Endothelial cell of umbilical vein (primary cell): ENCODE measurements at regions of chr9 and their contacts with region 1.

Region 1: DNA sequence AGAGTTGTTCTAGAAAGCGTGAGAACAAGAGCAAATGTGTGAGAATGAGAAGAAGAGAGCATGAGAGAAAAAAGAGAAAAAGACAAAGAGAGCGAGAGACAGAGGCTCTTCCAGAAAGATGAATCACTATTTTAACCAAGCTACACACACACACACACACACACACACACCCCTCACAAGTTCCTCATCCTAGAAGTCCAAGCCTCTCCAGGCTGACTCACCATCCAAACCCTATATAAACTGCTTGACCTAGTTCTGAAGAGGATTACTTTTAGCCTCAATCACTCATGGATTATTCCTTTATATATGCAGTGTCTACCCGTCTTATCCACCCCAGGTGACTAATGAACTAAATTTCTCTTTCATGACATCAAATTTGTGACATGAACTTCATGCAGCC is 37.6 kb downstream of the C9orf57 start:
- DNase-seq: no peak
- H3K4me3 ChIP-seq: no peak overlapping the region
- H3K27ac ChIP-seq: no peak overlapping the region
- H3K4me1 ChIP-seq: no peaks in the 10 kb centered on the region
- H3K27me3 ChIP-seq: no peaks in the 10 kb centered on the region
- CTCF ChIP-seq: no peak
- POLR2A ChIP-seq: no peak

Region 2: GRCh38 chr9:71285191-71285656 is 737.6 kb before region 1 on chr9:
- CTCF ChIA-PET with region 1: interaction called, 39 read pairs
- POLR2A ChIA-PET with region 1: no interaction called
- dilution Hi-C with region 1: no loop called
- intact Hi-C with region 1: loop called (anchors 1 kb)
- DNase-seq: peak; percentile 73
- H3K4me3 ChIP-seq: no peak overlapping the region
- H3K27ac ChIP-seq: no peak overlapping the region
- H3K4me1 ChIP-seq: no peaks in the 10 kb centered on the region
- H3K27me3 ChIP-seq: no peaks in the 10 kb centered on the region
- CTCF ChIP-seq: peak; percentile 70 to 73
- POLR2A ChIP-seq: no peak

Region 3: GRCh38 chr9:71806901-71807307 is 215.9 kb before region 1 on chr9:
- CTCF ChIA-PET with region 1: interaction called, 318 read pairs
- POLR2A ChIA-PET with region 1: no interaction called
- dilution Hi-C with region 1: no loop called
- intact Hi-C with region 1: loop called (anchors 1 kb)
- DNase-seq: peak; percentile 74
- H3K4me3 ChIP-seq: no peak overlapping the region
- H3K27ac ChIP-seq: no peak overlapping the region
- H3K4me1 ChIP-seq: no peaks in the 10 kb centered on the region
- H3K27me3 ChIP-seq: peaks cover 0 to 3% of the 10 kb centered on the region in 2 experiments
- CTCF ChIP-seq: peak; percentile 77 to 85
- POLR2A ChIP-seq: no peak

Region 4: DNA sequence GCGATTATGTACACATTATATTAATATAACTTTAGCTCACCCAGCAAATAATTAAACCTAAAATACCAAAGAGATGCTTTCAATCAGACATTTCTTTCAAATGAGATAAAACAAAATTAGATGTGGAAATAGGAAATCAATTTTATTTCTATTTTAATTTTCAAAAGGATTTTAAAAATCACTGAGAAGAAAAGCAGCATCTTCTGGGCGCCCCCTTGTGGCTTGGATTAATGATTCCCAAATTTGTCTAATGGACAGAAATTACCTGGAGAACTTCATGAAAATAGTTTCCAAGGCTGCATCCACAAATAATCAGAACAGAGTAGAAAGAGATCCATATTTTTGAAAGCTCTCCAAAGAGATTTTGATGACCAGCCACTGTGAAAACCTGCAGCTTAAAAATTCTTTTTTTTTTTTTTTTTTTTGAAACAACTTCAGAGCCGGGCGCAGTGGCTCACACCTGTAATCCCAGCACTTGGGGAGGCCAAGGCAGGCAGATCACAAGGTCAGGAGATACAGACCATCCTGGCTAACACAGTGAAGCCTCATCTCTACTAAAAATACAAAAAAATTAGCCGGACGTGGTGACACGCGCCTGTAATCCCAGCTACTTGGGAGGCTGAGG is 203.6 kb before region 1 on chr9:
- CTCF ChIA-PET with region 1: interaction called, 70 read pairs
- POLR2A ChIA-PET with region 1: no interaction called
- dilution Hi-C with region 1: no loop called
- intact Hi-C with region 1: no loop called
- DNase-seq: peak; percentile 35
- H3K4me3 ChIP-seq: no peak overlapping the region
- H3K27ac ChIP-seq: no peak overlapping the region
- H3K4me1 ChIP-seq: peaks cover 4% of the 10 kb centered on the region
- H3K27me3 ChIP-seq: peaks cover 0 to 2% of the 10 kb centered on the region in 2 experiments
- CTCF ChIP-seq: peak; percentile 44 to 49
- POLR2A ChIP-seq: no peak

Region 5: GRCh38 chr9:72006501-72006900 is 16.3 kb before region 1 on chr9:
- CTCF ChIA-PET with region 1: interaction called, 33 read pairs
- POLR2A ChIA-PET with region 1: no interaction called
- dilution Hi-C with region 1: no loop called
- intact Hi-C with region 1: no loop called
- DNase-seq: no peak
- H3K4me3 ChIP-seq: no peak overlapping the region
- H3K27ac ChIP-seq: no peak overlapping the region
- H3K4me1 ChIP-seq: no peaks in the 10 kb centered on the region
- H3K27me3 ChIP-seq: no peaks in the 10 kb centered on the region
- CTCF ChIP-seq: no peak
- POLR2A ChIP-seq: no peak